Breast epithelium (tissue), 4 donors: ENCODE measurements at regions of chr11 and their contacts with region 1.

Region 1: DNA sequence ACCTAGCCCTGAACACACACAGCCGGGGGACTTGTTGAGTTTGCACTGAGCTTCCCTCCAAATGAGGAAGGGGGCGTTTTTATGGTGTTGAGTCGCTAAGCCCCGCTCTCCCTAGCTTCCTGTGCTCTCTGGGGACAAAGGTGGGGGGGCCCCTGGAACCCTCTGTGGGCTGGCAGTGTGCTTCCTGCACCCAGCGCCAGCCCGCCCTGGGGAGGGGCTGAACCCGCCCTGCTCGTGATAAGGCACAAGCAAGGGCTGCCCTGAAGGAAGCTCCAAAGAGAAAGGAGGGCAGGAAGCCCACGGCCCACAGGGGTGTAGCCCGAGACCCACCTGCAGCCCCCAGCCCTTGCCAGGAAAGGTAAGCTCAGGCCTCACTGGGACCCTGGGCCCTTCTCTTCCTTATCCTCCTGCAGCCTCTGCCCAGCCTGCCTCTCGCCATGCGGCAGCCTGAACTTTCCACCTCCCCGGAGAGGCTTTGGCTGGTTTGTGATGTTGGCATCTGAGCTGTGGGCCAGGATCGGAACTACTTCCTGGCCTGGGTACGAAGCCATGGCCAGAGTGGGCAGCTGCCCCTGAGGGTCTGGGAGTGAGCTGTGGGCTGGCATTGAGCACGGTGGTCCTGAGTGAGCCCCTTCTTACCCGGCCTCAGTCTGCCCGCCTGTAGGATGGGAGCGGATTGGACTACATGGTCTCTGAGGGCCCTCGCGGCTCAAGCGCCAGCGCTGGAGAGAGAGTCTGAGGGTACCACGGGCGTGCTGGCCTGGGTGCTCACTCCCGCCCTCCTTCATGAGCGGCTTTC is at the start of gene FERMT3:
- DNase-seq: no peak
- H3K4me3 ChIP-seq: peak within 1 kb of the TSS; percentile 39 to 62 (median 46)
- H3K27ac ChIP-seq: peak within 1 kb of the TSS; percentile 62 to 95
- H3K4me1 ChIP-seq: peaks cover 0 to 8% of the 10 kb centered on the region in 2 donors
- H3K27me3 ChIP-seq: no peaks in the 10 kb centered on the region
- CTCF ChIP-seq: no peak
- POLR2A ChIP-seq: no peak
- total RNA-seq, gene FERMT3: 14.0 to 42.2 (median 17.4) TPM

Region 2: GRCh38 chr11:64124147-64124546 is 82.5 kb before region 1 on chr11:
- intact Hi-C with region 1: no loop called
- DNase-seq: no peak
- H3K4me3 ChIP-seq: no peak overlapping the region
- H3K27ac ChIP-seq: no peak overlapping the region
- H3K4me1 ChIP-seq: peaks cover 0 to 4% of the 10 kb centered on the region in 2 donors
- H3K27me3 ChIP-seq: no peaks in the 10 kb centered on the region
- CTCF ChIP-seq: no peak
- POLR2A ChIP-seq: no peak

Region 3: GRCh38 chr11:64304316-64305072 is 97.8 kb after region 1 on chr11:
- intact Hi-C with region 1: loop called (anchors 1 kb)
- DNase-seq: peak; percentile 84 to 94
- H3K4me3 ChIP-seq: peak overlapping the region; percentile 62 to 75 (median 69)
- H3K27ac ChIP-seq: peak overlapping the region; percentile 89 to 90
- H3K4me1 ChIP-seq: peaks cover 15 to 23% of the 10 kb centered on the region in 2 donors
- H3K27me3 ChIP-seq: peaks cover 0 to 14% of the 10 kb centered on the region in 2 donors
- CTCF ChIP-seq: peak; percentile 68 to 94 (median 89)
- POLR2A ChIP-seq: no peak